ENCODE measurements at regions of chr7 and their contacts with region 1.

Region 1: GRCh38 chr7:143279186-143280098 is 5.3 kb upstream of the TMEM139 start:
- DNase-seq: no peak
- H3K4me3 Mint-ChIP-seq: peak overlapping the region; percentile 65
- H3K27ac Mint-ChIP-seq: peak overlapping the region; percentile 70
- H3K4me1 Mint-ChIP-seq: peaks cover 41% of the 10 kb centered on the region
- H3K27me3 Mint-ChIP-seq: no peaks in the 10 kb centered on the region

Region 2: DNA sequence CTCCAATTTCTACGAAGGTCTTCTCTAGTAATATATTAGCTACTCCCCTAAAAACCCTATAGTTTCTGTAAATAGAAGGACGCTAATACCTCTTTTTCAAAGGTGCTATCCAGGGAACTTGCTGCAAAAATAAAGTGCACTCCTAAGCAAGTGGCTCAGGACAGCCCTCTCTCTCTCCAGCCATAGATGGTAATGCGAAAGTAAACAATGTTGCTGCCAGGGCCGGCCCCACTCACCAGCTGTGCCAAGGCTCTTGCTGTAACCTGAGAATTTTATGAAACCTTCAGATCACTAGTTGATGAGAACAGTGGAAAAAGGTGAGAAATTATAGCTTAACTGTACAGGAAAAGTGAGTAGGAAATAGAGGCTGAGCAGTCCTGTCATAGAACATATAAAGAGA is 107.1 kb before region 1 on chr7:
- CTCF ChIA-PET with region 1: no interaction called
- POLR2A ChIA-PET with region 1: no interaction called
- DNase-seq: no peak
- H3K4me3 Mint-ChIP-seq: no peak overlapping the region
- H3K27ac Mint-ChIP-seq: no peak overlapping the region
- H3K4me1 Mint-ChIP-seq: no peaks in the 10 kb centered on the region
- H3K27me3 Mint-ChIP-seq: peaks cover 3% of the 10 kb centered on the region

Region 3: DNA sequence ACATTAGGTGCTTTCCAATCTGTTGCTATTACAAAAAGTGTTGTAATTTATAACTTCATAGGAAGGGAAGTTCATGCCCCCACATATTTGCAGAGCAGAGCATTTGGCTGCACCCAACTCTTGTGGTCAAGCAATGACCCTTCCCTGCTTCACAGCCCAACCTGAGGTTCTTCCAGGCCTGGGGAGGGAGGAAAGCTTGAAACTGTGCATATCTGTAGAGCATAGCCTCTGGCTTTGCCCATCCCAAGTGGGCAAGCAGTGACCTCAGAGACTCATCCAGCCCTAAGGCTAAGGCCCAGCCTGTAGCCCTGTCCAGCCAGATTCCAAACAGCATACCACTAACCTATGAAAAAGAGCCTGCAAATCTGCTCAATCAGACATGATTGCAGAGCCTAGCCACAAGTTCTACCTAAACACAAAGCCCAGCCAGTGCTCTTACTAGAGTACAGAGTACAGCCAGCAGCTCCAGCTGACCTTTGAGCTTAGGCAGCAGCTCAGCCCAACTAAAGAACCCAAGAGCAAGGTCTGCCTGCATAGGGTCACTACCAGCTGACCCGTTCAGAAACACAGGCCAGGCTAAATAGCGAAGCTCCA is 30.6 kb before region 1 on chr7:
- CTCF ChIA-PET with region 1: interaction called, 3 read pairs
- POLR2A ChIA-PET with region 1: interaction called, 14 read pairs
- DNase-seq: no peak
- H3K4me3 Mint-ChIP-seq: no peak overlapping the region
- H3K27ac Mint-ChIP-seq: no peak overlapping the region
- H3K4me1 Mint-ChIP-seq: peaks cover 87% of the 10 kb centered on the region
- H3K27me3 Mint-ChIP-seq: no peaks in the 10 kb centered on the region

Region 4: DNA sequence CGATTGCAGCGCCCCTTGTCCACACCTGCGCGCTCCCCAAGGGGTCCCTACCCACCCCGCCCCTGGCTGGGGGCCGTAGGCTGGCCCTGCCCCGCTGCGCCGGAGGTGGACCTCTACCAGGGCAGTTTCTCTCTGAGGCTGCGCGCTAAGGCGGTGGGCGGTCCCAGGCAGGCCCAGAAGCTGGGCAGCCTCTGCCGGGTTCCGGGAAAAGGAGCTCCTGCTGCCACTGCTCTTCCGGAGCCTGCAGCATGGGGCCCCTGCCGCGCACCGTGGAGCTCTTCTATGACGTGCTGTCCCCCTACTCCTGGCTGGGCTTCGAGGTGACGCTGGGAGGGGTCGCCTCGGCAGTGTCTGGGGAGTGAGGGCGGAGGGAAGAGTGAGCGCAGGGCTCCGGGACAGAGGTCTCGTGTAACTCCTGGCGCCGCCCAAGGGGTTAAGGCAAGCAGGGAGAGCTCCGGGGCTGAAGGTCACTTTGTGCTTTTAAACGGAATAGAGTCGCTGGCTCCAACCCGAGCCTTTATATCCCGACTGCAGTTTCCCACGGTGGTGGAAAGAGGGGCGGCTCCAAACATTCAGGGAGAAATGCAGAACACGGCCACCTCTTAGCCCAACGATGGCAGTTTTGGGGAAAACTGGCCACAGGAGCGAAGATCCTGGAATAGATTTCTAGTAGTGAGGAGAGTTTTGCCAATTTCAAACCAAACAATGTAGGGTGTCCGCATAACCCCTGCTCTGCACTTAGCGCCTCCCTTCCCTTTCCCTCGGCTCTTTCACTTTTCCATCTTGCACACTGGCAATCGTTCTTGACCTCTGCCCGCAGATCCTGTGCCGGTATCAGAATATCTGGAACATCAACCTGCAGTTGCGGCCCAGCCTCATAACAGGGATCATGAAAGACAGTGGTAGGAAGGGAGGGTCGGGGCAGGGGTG is 15.9 kb before region 1 on chr7 and contains the start of gene GSTK1:
- CTCF ChIA-PET with region 1: interaction called, 11 read pairs
- POLR2A ChIA-PET with region 1: interaction called, 56 read pairs
- DNase-seq: peak; percentile 86
- H3K4me3 Mint-ChIP-seq: peak within 1 kb of the TSS; percentile 97
- H3K27ac Mint-ChIP-seq: peak within 1 kb of the TSS; percentile 87
- H3K4me1 Mint-ChIP-seq: peaks cover 73% of the 10 kb centered on the region
- H3K27me3 Mint-ChIP-seq: no peaks in the 10 kb centered on the region
- total RNA-seq, gene GSTK1: 502 to 518 TPM

Region 5: DNA sequence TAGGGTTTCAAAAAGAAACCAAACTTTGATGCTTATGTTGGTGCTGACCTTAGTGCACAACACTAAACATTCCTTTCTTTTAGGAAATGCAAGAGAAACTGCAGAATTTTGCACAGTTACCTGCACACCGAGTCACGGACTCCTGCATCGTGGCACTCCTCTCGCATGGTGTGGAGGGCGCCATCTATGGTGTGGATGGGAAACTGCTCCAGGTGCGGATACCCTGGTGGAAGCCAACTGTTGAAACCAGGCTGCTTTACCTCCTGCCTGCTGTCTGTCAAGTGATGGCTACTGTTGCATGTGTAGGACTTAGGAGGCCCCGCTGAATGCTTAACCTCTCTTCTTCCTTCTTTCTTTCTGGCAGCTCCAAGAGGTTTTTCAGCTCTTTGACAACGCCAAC is 20.4 kb after region 1 on chr7:
- CTCF ChIA-PET with region 1: interaction called, 23 read pairs
- POLR2A ChIA-PET with region 1: interaction called, 5 read pairs
- DNase-seq: peak; percentile 67
- H3K4me3 Mint-ChIP-seq: no peak overlapping the region
- H3K27ac Mint-ChIP-seq: peak overlapping the region; percentile 47
- H3K4me1 Mint-ChIP-seq: peaks cover 72% of the 10 kb centered on the region
- H3K27me3 Mint-ChIP-seq: no peaks in the 10 kb centered on the region

Measured in activated CD4-positive, alpha-beta memory T cell treated with anti-CD3 and anti-CD28 coated beads, Interleukin-2, amount 10 ng/mL, durations not matched to agents 7 days and 5 days (primary cell).